ENCODE measurements at regions of chr5 and their contacts with region 1.

Region 1: GRCh38 chr5:143824851-143825720 is 13.1 kb downstream of the HMHB1 start:
- DNase-seq: peak; percentile 95
- H3K4me3 Mint-ChIP-seq: no peak overlapping the region
- H3K27ac Mint-ChIP-seq: no peak overlapping the region
- H3K4me1 Mint-ChIP-seq: peaks cover 12% of the 10 kb centered on the region
- H3K27me3 Mint-ChIP-seq: no peaks in the 10 kb centered on the region

Region 2: GRCh38 chr5:143002459-143003328 is 822.4 kb before region 1 on chr5:
- intact Hi-C with region 1: loop called (anchors 1 kb)
- DNase-seq: peak; percentile 90
- H3K4me3 Mint-ChIP-seq: peak overlapping the region; percentile 76
- H3K27ac Mint-ChIP-seq: peak overlapping the region; percentile 99
- H3K4me1 Mint-ChIP-seq: peaks cover 69% of the 10 kb centered on the region
- H3K27me3 Mint-ChIP-seq: no peaks in the 10 kb centered on the region

Region 3: DNA sequence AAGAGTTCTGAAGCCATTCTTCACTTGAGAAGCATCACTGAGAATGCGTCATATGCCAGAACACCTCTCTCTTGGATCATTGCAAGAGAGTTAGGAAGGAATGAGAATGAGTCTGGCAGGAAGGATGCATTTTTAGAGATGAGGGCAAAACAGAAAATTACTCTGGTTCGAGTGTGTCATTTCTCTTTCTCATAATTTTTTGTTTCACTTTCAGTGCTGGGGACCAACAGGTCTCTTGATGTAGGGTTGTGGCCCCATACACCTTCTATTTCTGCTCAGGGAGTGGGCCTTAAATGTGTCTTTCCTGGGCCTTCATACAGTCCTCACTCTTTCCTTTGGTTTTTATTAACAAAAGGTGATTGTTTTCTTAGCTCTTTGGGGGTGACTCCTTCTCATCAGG is 724.0 kb before region 1 on chr5:
- intact Hi-C with region 1: loop called (anchors 2 kb)
- DNase-seq: peak; percentile 76
- H3K4me3 Mint-ChIP-seq: peak overlapping the region; percentile 58
- H3K27ac Mint-ChIP-seq: peak overlapping the region; percentile 92
- H3K4me1 Mint-ChIP-seq: peaks cover 46% of the 10 kb centered on the region
- H3K27me3 Mint-ChIP-seq: no peaks in the 10 kb centered on the region

Region 4: DNA sequence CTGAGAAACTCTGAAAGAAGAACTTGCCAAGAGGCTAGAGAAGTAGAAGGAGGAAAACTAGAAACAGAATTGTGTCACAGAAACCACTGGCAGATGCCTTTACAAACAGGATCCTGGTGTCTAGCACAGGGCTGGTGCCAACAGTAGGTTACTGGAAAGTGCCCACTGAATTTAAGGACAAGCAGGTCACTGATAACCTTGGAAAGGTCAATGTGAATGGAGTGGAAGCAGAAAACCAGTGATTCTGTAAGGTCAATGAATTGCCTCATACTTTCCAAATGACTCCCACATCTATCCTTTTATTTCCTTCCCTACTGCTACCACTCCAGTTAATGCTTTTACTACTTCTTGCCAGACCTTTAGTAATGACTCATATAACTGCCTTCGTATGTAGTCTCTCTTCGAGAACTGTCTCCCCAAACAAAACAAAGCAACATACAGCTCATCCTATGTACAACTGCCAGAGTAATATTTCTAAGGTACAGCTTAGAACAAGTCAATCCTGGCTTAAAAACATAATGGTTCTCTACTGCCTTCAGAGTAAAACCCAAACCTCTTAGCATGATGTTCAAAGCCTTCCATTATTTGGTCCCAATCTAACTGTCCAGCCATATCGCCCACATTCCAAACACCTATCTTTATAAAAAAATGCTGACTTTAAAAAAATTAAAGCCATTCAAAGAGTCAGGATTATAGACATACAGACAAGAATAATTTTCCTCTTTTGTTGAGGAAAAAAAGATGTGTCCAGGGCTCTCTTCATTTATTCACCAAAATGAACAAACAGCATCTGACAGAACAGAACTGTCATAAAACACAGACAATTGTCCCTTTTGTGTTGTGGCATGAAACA is 474.1 kb before region 1 on chr5:
- intact Hi-C with region 1: loop called (anchors 5 kb)
- DNase-seq: no peak
- H3K4me3 Mint-ChIP-seq: no peak overlapping the region
- H3K27ac Mint-ChIP-seq: no peak overlapping the region
- H3K4me1 Mint-ChIP-seq: peaks cover 42% of the 10 kb centered on the region
- H3K27me3 Mint-ChIP-seq: no peaks in the 10 kb centered on the region

Region 5: GRCh38 chr5:143464723-143465490 is 360.2 kb before region 1 on chr5:
- intact Hi-C with region 1: no loop called
- DNase-seq: no peak
- H3K4me3 Mint-ChIP-seq: no peak overlapping the region
- H3K27ac Mint-ChIP-seq: no peak overlapping the region
- H3K4me1 Mint-ChIP-seq: no peaks in the 10 kb centered on the region
- H3K27me3 Mint-ChIP-seq: no peaks in the 10 kb centered on the region

Region 6: DNA sequence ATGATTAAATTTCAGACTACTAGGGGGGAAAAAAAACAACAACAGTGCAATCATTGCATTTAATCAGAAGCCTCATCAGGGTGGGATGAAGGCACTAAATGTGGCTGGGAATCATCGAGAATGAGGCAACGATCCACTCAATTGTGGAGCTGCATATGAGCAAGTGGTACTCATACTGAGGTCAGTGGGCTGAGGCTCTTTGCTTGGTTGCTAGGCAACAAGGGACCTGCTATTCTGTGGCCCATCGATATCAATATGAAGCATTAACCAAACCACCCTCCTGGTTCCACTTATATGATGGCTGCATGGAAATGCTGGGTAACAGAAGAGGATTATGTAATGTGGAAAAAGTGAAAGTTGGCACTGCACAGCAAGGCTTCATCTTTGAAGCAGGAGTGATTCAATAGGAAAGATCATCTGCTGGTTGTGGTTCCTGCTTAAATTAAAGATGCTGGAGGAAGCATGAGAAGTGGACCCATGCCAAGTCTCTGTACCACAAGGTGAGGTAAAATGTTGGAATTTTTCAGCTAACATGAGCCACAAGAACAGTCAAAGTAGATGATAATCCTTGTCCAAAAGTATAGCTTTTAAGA is 172.9 kb before region 1 on chr5:
- intact Hi-C with region 1: loop called (anchors 5 kb)
- DNase-seq: no peak
- H3K4me3 Mint-ChIP-seq: no peak overlapping the region
- H3K27ac Mint-ChIP-seq: no peak overlapping the region
- H3K4me1 Mint-ChIP-seq: peaks cover 8% of the 10 kb centered on the region
- H3K27me3 Mint-ChIP-seq: peaks cover 2% of the 10 kb centered on the region

Region 7: DNA sequence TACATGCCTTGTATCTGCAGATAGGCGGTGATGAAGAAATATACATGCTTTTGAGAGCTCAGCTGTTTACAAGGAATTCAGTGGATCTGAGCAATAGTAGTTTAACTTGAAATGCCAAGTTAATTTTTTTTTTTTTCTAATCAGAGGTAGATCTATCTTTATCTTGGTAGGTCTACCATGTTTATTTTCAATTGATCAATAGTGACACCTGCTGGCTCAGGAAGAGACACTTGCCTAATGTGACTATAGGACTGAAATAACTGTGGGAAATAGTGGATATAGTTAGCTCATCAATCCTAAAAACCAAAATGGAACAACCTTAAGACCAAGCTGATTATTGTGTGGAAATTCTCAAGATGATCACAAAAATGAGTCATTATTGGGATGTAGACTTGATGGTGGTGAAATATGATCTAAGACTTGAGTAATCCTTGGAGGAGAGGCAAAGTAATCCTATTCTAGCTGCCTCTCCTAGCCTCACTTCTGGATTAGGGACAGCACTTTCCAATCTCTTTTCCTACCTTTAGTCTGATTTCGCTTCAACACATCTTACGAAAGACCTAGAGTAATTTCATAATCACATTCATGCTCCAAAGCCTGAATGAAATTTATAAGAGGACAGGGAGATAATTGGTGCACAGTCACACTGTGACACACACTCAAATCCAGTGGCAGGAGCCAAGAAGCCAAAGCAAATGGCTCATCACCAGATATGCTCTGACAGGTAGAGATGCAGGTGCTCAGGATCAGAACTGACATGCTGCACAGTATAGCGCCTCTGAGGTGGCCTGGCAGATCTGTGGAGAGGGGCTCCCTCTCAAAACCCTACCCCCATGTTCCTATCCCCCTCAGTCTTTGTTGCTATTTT is 143.2 kb after region 1 on chr5:
- intact Hi-C with region 1: loop called (anchors 1 kb)
- DNase-seq: peak; percentile 74
- H3K4me3 Mint-ChIP-seq: no peak overlapping the region
- H3K27ac Mint-ChIP-seq: no peak overlapping the region
- H3K4me1 Mint-ChIP-seq: peaks cover 3% of the 10 kb centered on the region
- H3K27me3 Mint-ChIP-seq: peaks cover 34% of the 10 kb centered on the region

Measured in activated CD4-positive, alpha-beta T cell treated with anti-CD3 and anti-CD28 coated beads, Interleukin-2, amount 10 ng/mL, durations not matched to agents 24 days and 14 days (primary cell).